HepG2 (cell line): ENCODE measurements at regions of chr4 and their contacts with region 1.

Region 1: DNA sequence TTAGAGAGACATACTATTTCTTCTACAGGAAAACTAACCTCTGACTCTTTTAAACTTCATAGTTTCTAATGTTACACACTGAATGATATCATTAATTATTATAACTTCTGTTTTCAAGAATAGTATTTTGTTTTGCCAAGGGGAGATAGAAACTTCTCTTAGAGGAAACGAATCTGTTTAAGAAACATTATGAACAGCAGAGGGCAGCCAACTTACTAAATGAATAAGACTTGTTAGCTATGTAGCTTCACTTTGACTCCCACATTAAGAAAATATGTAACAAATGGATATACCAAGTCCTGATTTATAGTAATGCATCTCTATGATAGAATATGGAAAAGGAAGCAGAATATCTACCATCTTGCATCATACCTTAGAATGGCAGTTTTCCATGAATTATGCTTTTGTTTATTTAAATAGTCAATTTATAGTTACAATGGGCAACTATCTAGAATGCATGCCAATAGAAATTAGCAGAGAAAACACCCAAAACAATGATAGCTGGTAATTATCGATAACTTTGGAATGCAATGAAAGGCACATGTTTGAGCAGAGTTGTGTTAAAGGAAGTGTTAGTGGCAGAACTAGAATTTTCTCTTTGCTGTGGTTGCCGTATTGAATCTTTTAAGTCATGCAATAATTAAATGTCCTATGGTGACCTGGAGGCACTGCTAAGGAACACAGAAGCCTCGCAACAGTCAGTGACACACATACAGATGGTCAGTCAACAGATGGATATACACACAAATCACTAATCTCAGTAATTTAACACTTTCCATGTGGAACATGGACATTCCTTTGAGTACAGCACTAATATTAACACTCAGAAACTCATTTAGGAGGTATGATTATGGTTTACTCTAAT is 105.7 kb upstream of the PDLIM3 start:
- DNase-seq: peak; percentile 76
- ATAC-seq: 0 out of 3 replicates have a peak, but pooled peaks have one; percentile 33
- H3K4me3 ChIP-seq: no peak overlapping the region
- H3K27ac ChIP-seq: no peak overlapping the region
- H3K4me1 ChIP-seq: no peaks in the 10 kb centered on the region
- H3K27me3 ChIP-seq: no peaks in the 10 kb centered on the region; a peak in 1 of 5 replicates
- CTCF ChIP-seq: peak; percentile 51
- EP300 ChIP-seq: no peak
- POLR2A ChIP-seq: no peak
- RAD21 ChIP-seq: no peak; the same call in 1 of the 2 replicates

Region 2: GRCh38 chr4:186021461-186022167 is 380.6 kb after region 1 on chr4:
- CTCF ChIA-PET with region 1: interaction called, 14 read pairs
- POLR2A ChIA-PET with region 1: no interaction called
- in situ Hi-C with region 1: loop called (anchors 5 kb)
- intact Hi-C with region 1: loop called (anchors 1 kb)
- DNase-seq: peak; percentile 30
- ATAC-seq: peak; percentile 73
- H3K4me3 ChIP-seq: no peak overlapping the region
- H3K27ac ChIP-seq: no peak overlapping the region
- H3K4me1 ChIP-seq: peaks cover 4% of the 10 kb centered on the region; the same call in 1 of the 2 replicates
- H3K27me3 ChIP-seq: peaks cover 3 to 25% of the 10 kb centered on the region in 2 experiments; a peak in 2 of 5 replicates
- CTCF ChIP-seq: peak; percentile 87
- EP300 ChIP-seq: no peak
- POLR2A ChIP-seq: no peak
- RAD21 ChIP-seq: peak; percentile 84

Region 3: DNA sequence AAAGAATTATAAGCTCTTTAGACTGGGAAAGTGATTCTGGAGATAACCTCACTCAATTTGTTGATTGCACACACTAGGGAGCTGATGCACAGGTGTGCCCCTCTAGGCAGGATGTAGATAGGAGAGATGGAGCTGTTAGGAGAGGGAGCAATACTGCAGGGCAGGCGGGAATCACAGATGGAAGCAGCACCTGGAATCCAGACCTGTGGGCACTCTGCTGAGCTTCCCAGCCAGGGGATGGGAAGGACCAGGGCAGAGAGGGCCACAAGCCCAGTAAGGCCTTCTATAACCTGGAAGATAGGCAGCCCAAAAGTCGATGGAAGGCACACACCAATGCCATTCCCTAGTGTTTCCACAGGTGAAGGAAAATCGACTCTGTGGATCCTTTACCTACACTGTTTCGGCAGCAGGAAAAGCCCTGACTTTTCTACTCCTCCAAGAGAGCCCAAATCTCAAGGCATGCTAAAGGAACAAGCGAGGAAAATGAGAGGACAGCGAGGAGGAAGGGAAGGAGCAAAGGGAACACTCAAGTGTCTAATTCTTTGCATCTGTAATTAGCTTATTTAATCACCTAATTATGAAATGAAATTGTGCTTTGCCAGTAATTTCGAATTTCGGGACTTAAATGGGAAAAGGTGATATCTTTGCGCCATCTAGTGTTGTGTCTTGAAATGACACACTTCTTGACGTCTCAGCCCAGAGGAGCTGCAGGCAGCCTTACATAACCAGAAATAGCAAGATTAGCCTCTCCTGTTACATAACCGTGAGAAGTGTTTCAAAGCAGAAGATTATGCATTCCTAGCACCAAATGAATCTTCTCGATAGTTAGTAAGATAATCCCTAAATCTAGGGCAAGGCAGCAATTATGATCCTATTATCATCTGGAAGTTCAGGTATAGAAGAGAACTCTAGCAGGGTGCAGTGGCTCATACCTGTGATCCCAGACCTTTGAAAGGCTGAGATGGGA is 396.9 kb after region 1 on chr4:
- CTCF ChIA-PET with region 1: interaction called, 16 read pairs
- POLR2A ChIA-PET with region 1: no interaction called
- in situ Hi-C with region 1: no loop called
- intact Hi-C with region 1: loop called (anchors 2 kb)
- DNase-seq: peak; percentile 59
- ATAC-seq: peak; percentile 73
- H3K4me3 ChIP-seq: no peak overlapping the region
- H3K27ac ChIP-seq: no peak overlapping the region
- H3K4me1 ChIP-seq: peaks cover 12% of the 10 kb centered on the region; the same call in 1 of the 2 replicates
- H3K27me3 ChIP-seq: peaks cover 1 to 17% of the 10 kb centered on the region in 2 experiments; a peak in 4 of 5 replicates
- CTCF ChIP-seq: peak; percentile 88
- EP300 ChIP-seq: no peak
- POLR2A ChIP-seq: no peak
- RAD21 ChIP-seq: peak; percentile 77

Region 4: GRCh38 chr4:186392026-186392425 is 751.0 kb after region 1 on chr4:
- CTCF ChIA-PET with region 1: no interaction called
- POLR2A ChIA-PET with region 1: no interaction called
- in situ Hi-C with region 1: no loop called
- intact Hi-C with region 1: no loop called
- DNase-seq: no peak
- ATAC-seq: no peak
- H3K4me3 ChIP-seq: no peak overlapping the region
- H3K27ac ChIP-seq: no peak overlapping the region
- H3K4me1 ChIP-seq: no peaks in the 10 kb centered on the region
- H3K27me3 ChIP-seq: no peaks in the 10 kb centered on the region; a peak in 1 of 5 replicates
- CTCF ChIP-seq: no peak
- EP300 ChIP-seq: no peak
- POLR2A ChIP-seq: no peak
- RAD21 ChIP-seq: no peak